WTC11 (cell line): ENCODE measurements at regions of chr1 and their contacts with region 1.

Region 1: DNA sequence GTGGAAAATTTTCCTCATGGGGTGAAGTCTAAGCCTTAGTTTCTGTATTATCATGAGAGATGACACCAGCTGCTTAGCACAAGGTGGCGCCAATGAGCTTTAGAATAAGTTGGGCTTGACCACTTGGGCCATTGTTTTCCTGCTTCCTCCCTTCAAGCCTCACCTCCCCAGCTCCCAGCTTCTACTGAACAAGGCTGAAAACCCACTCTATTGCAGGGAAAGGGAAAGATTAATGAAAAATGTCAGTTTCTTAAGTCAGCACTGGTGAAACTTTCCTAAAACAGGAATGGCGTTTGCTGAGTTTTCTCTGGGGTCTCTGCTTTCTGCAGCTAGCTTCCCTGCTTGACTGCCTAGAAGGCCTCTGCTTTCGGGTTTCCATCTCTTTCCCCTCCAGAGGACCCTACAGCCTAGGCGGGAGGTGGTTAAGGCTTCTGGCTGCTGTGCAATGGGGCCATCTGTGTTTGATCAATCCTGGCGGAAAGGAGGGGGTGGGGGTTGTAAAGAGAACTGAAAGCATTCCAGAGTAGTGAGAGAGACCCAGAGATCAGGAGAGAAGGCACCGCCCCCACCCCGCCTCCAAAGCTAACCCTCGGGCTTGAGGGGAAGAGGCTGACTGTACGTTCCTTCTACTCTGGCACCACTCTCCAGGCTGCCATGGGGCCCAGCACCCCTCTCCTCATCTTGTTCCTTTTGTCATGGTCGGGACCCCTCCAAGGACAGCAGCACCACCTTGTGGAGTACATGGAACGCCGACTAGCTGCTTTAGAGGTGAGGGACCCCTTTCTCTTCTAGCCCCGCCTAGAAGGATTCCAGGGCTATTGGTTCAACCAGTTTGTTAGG is at the start of gene OLFML3:
- DNase-seq: peak; percentile 85
- ATAC-seq: peak; percentile 79
- H3K4me3 Mint-ChIP-seq: peak within 1 kb of the TSS; percentile 64
- H3K27ac Mint-ChIP-seq: peak within 1 kb of the TSS; percentile 97
- H3K4me1 Mint-ChIP-seq: peaks cover 91% of the 10 kb centered on the region
- H3K27me3 Mint-ChIP-seq: no peaks in the 10 kb centered on the region
- CTCF ChIP-seq: peak; percentile 54
- total RNA-seq, gene OLFML3: 65.8 to 91.1 TPM (median 90.4 TPM) in 3 replicates

Region 2: GRCh38 chr1:113669984-113670383 is 309.1 kb before region 1 on chr1:
- CTCF ChIA-PET with region 1: no interaction called
- POLR2A ChIA-PET with region 1: no interaction called
- DNase-seq: no peak
- ATAC-seq: no peak
- H3K4me3 Mint-ChIP-seq: no peak overlapping the region
- H3K27ac Mint-ChIP-seq: no peak overlapping the region
- H3K4me1 Mint-ChIP-seq: no peaks in the 10 kb centered on the region
- H3K27me3 Mint-ChIP-seq: no peaks in the 10 kb centered on the region
- CTCF ChIP-seq: no peak

Region 3: DNA sequence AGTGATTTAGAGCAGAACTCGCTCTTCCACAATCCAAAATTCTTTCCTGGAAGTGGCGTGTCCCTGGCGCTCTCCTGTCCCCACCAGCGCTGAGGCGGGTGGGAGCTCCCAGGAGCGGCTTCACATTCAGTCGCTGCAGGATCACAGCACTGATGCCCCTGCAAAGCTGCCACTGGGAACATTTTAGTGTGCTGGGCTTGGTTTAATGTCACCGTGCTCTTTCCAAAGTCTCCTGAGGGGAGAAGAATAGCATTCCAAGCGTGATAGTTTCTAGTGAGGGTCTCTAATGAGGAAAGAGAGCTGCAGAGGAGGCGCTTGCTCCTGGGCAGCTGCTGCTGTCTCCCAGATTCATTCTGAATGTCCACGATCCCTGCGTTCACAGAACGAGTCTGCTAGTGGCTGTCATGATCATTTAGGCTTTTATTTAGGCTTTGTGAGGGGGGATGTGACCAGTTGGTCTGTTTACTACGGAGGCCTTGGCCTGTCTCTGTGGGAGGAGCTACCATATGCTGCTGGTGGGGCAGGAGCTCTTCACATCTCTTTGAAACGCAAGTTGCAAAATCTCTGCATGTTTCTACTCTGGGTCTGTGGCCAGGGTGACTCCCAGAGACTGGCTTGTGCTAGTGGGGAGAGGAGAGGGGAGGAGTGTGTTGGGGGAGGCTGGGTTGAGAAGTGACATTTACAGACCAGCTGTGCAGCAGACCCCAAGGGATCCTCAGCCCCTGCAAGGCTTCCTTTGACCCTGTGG is 23.6 kb after region 1 on chr1:
- CTCF ChIA-PET with region 1: interaction called, 12 read pairs
- POLR2A ChIA-PET with region 1: no interaction called
- DNase-seq: no peak
- ATAC-seq: peak; percentile 67
- H3K4me3 Mint-ChIP-seq: no peak overlapping the region
- H3K27ac Mint-ChIP-seq: peak overlapping the region; percentile 16
- H3K4me1 Mint-ChIP-seq: peaks cover 61% of the 10 kb centered on the region
- H3K27me3 Mint-ChIP-seq: peaks cover 23% of the 10 kb centered on the region
- CTCF ChIP-seq: no peak

Region 4: DNA sequence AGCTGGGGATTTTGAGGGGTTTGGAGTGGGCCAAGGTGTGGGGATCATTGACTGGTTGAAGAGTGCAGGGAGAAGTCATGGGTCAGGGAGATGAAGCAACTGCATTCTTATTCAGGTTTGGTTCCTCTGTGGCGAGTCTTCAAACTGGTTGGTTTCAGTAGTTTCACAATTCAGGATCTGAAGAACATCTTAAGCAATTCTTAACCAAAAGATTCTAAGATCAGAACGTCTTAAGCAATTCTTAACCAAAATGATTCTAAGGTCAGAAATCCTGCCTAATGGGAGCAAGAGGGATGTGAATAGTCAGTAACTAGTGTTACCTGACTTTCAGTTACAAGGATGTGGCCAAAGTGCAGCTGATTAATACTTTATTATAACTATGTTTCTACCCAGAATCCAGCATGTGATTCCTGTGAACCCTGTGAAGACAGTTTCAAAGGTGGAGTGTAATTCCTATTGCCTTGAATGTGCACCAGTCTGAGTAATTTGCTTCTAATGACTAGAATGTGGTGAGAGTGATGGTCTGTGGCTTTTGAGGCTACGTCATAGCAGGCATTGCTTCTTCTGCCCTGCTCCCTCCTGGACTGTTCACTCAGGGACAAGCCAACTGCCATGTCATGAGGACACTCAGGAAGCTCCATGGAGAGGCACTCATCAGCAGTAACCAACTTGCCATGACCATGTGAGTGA is 61.4 kb after region 1 on chr1:
- CTCF ChIA-PET with region 1: interaction called, 39 read pairs
- POLR2A ChIA-PET with region 1: interaction called, 3 read pairs
- DNase-seq: no peak
- ATAC-seq: no peak
- H3K4me3 Mint-ChIP-seq: no peak overlapping the region
- H3K27ac Mint-ChIP-seq: peak overlapping the region; percentile 82
- H3K4me1 Mint-ChIP-seq: peaks cover 51% of the 10 kb centered on the region
- H3K27me3 Mint-ChIP-seq: peaks cover 11% of the 10 kb centered on the region
- CTCF ChIP-seq: no peak

Region 5: GRCh38 chr1:114118351-114118990 is 139.4 kb after region 1 on chr1:
- CTCF ChIA-PET with region 1: interaction called, 14 read pairs
- POLR2A ChIA-PET with region 1: no interaction called
- DNase-seq: peak; percentile 63
- ATAC-seq: peak; percentile 77
- H3K4me3 Mint-ChIP-seq: no peak overlapping the region
- H3K27ac Mint-ChIP-seq: peak overlapping the region; percentile 92
- H3K4me1 Mint-ChIP-seq: peaks cover 84% of the 10 kb centered on the region
- H3K27me3 Mint-ChIP-seq: no peaks in the 10 kb centered on the region; the same call in 1 of the 2 replicates
- CTCF ChIP-seq: no peak

Region 6: GRCh38 chr1:114152508-114153260 is 173.6 kb after region 1 on chr1:
- CTCF ChIA-PET with region 1: interaction called, 51 read pairs
- POLR2A ChIA-PET with region 1: interaction called, 3 read pairs
- DNase-seq: peak; percentile 57
- ATAC-seq: peak; percentile 15
- H3K4me3 Mint-ChIP-seq: peak overlapping the region; percentile 80
- H3K27ac Mint-ChIP-seq: no peak overlapping the region
- H3K4me1 Mint-ChIP-seq: peaks cover 76% of the 10 kb centered on the region
- H3K27me3 Mint-ChIP-seq: peaks cover 27% of the 10 kb centered on the region
- CTCF ChIP-seq: no peak

Region 7: DNA sequence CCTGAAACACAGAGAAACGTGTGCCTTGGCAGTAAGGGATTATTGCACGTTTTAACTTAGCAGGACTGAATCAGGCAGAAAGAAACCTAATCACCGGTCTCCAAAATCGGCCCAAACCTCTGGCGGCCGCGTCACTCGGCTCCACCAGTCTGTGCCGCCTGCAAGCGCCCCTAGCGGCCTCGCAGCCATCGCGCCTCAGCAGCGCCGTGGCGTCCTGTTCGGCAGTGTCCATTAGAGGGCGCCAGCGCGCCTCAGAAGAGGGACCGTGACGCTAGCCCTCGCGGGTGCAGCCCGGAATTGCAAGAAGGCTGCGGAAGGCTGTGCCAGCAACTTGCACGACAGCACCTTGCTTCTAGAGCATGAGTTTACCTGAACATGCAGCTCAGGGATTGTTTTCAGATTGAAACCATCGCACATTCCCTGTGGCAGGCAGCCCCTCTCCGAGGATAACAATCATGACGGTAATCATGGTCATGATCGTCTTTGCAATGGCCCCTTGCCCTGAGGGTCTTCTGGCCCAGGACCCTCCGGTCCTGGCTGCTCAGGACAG is 367.5 kb after region 1 on chr1:
- CTCF ChIA-PET with region 1: interaction called, 68 read pairs
- POLR2A ChIA-PET with region 1: no interaction called
- DNase-seq: peak; percentile 98
- ATAC-seq: peak; percentile 92
- H3K4me3 Mint-ChIP-seq: peak overlapping the region; percentile 88
- H3K27ac Mint-ChIP-seq: peak overlapping the region; percentile 94
- H3K4me1 Mint-ChIP-seq: peaks cover 10% of the 10 kb centered on the region
- H3K27me3 Mint-ChIP-seq: peaks cover 17% of the 10 kb centered on the region
- CTCF ChIP-seq: peak; percentile 99

Region 8: GRCh38 chr1:114549137-114549536 is 570.1 kb after region 1 on chr1:
- CTCF ChIA-PET with region 1: no interaction called
- POLR2A ChIA-PET with region 1: no interaction called
- DNase-seq: no peak
- ATAC-seq: no peak
- H3K4me3 Mint-ChIP-seq: no peak overlapping the region
- H3K27ac Mint-ChIP-seq: no peak overlapping the region
- H3K4me1 Mint-ChIP-seq: no peaks in the 10 kb centered on the region
- H3K27me3 Mint-ChIP-seq: no peaks in the 10 kb centered on the region; the same call in 1 of the 2 replicates
- CTCF ChIP-seq: no peak